Posterior cingulate gyrus (tissue), 11 donors: ENCODE measurements at regions of chr11 and their contacts with region 1.

Region 1: GRCh38 chr11:76087749-76088148 is 118.6 kb downstream of the WNT11 start:
- DNase-seq: no peak

Region 2: GRCh38 chr11:75499449-75500190 is 588.1 kb before region 1 on chr11:
- intact Hi-C with region 1: no loop called
- DNase-seq: peak in 1 of 10 donors; percentile 33

Region 3: GRCh38 chr11:76025068-76025467 is 62.7 kb before region 1 on chr11:
- intact Hi-C with region 1: no loop called
- DNase-seq: no peak

Region 4: DNA sequence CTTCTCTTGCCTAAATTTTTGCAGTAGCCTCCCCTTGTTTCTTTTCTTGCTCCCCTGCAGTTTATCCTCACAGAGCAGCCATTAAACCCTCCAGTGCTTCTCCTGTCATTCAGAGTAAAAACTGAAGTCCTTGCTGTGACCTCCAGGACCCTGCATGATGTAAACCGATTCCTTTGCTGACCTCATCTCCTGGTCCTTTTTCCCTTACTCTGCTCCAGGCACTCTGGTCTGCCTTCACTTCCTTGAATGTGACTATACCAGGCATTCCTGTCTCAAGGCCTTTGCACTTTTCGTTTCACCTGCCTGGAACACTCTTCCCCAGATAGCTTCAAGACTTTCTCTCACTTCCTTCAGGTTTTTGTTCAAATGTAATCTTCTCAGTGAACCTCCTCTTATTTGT is 33.4 kb before region 1 on chr11:
- intact Hi-C with region 1: loop called (anchors 1 kb)
- DNase-seq: no peak

Region 5: DNA sequence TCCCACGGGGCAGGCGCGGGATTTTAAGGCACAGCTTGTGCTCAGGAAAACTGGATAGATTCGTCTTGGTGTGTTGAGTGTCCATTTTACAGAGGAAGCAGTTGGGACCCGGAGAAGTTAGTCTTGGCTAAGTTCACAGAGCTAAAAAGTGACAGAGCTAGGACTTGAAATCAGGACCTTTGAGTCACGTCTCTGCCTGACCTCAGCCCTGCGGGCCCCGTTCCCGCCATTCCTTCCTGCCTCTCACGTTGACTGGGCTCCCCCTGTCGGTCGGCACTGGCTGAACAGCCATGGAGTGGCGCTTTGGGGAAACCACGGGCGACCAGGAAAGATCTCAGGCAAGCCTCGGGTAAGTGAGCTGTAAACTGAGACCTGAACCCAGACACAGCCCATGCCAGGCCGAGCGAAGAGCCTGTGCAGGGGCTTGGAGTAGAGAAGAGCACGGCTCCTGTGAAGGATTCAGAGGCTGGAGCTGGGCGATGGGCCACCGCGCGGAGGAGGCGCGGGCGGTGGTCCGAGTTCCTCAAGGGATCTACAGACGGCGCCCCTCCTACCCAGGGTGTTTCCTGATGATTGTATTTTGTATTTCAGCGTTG is 64.4 kb after region 1 on chr11:
- intact Hi-C with region 1: no loop called
- DNase-seq: peak; percentile 65 to 97 (median 87)

Region 6: GRCh38 chr11:76380162-76380966 is 292.6 kb after region 1 on chr11:
- intact Hi-C with region 1: no loop called
- DNase-seq: peak in 7 of 10 donors; percentile 9 to 88 (median 21)